Mucosa of descending colon (tissue), 3 donors: ENCODE measurements at regions of chr18 and their contacts with region 1.

Region 1: GRCh38 chr18:10006311-10006893 is 92.6 kb downstream of the VAPA start:
- DNase-seq: no peak
- ATAC-seq: no peak
- H3K4me3 ChIP-seq: no peak overlapping the region
- H3K4me1 ChIP-seq: peaks cover 5% of the 10 kb centered on the region
- CTCF ChIP-seq: no peak

Region 2: GRCh38 chr18:10059610-10060468 is 53.4 kb after region 1 on chr18:
- intact Hi-C with region 1: no loop called
- DNase-seq: no peak
- ATAC-seq: no peak
- H3K4me3 ChIP-seq: no peak overlapping the region
- H3K4me1 ChIP-seq: peaks cover 2% of the 10 kb centered on the region
- CTCF ChIP-seq: no peak

Region 3: DNA sequence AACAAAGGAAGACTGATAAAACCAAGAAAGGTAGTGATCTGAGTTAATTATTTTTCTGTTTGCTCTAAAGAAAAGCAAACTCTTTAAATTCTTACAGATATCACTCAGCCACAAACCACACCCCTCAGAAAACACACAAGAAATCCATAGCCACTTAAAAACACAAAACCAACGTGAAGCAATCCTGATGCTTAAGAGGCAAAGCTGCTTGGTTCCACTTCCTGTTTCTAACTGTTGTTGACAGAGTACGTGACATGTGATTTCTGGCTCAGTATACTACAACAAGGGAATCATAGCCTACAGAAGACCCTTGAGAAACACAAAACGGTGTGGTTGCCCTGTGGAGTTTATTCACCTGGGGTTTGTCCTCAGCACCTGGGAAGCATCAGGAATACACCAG is 207.1 kb after region 1 on chr18:
- intact Hi-C with region 1: no loop called
- DNase-seq: peak in 1 of 3 donors; percentile 7
- ATAC-seq: peak; percentile 50
- H3K4me3 ChIP-seq: no peak overlapping the region
- H3K4me1 ChIP-seq: no peaks in the 10 kb centered on the region
- CTCF ChIP-seq: no peak

Region 4: DNA sequence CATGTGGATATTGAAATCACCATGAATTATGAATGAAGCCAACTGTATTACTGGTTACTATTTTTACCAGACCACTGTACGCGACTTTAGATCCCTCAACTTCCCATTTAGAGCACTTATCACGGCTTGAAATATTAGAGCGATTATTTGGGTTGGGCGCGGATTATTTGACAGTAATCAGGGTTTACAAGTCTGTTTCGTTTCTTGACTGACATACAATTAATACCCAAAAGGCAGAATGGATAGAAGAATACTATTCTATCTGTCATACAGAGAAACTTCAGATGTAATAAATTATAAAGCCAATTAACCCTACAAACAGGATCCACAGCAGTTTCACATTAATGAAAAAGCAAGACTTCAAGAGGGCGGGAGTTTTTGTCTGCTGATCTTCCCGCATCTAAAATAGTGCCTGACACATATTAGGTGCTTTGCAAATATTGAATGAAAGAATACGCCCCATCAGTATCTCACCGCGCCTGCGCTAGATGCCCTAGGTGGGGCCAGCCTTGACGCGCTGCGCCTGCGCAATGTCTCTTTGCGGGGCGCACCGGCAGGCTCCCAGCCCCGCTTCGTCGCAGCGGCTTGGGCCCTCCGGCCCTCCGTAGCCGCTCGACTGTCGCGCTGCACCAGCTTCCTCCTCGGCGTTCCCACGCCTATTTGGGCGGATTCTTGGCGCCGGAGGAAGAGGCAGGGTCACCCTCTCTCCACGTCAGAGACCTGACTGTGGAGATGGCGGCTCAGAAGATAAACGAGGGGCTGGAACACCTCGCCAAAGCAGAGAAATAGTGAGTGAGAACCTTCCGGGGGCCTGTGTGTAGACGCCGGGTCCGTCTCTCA is 519.2 kb after region 1 on chr18 and contains the start of gene NAPG:
- intact Hi-C with region 1: loop called in 1 of 2 experiments (anchors 10 kb)
- DNase-seq: peak; percentile 88 to 95 (median 94)
- ATAC-seq: peak; percentile 97
- H3K4me3 ChIP-seq: peak within 1 kb of the TSS; percentile 96
- H3K4me1 ChIP-seq: peaks cover 20% of the 10 kb centered on the region
- CTCF ChIP-seq: no peak
- total RNA-seq, gene NAPG: 36.3 to 43.1 (median 38.1) TPM